Head of caudate nucleus (tissue), 42 donors: ENCODE measurements at regions of chr7 and their contacts with region 1.

Region 1: GRCh38 chr7:99143853-99144672 is at the start of gene SMURF1:
- DNase-seq: peak; percentile 25 to 84 (median 68)

Region 2: DNA sequence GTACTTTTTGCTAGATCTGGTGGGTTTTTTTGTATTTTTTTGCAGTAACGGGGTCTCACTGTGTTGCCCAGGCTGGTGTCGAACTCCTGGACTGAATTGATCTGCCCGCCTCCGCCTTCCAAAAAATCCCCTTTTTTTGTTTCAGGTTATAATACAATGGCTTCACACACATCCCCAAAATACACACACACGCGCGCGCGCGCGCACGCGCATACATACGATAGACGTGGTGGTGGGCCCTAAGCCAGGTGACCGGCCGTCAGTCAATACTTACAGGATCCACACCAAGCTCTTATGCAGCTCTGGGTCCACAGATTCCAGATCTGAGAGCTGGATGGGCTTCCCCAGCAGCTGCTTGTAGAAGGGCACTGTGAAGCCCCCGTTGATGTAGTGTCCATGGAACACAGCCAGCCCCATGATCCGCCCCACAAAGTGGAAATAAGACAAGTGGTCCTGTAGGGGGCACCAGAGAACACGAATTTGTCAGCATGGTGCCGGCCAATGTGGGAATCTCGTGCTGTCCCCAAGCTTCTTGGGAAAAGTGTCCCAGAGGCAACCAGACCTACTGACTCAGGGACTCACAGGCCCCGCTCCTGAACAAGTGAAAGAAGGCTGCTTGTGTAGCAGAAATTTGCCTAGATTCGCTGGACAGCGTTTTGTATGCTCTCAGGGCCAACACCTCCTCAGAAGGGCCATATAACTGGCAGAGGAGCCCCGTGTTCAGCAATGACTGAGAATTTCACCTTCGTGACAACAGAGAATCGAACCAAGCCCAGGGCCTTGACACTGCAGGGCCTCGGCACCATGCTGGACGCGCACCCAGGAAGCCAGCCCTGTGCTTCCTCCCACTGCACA is 103.7 kb before region 1 on chr7:
- intact Hi-C with region 1: loop called (anchors 5 kb)
- DNase-seq: peak; percentile 68 to 96 (median 86)

Region 3: DNA sequence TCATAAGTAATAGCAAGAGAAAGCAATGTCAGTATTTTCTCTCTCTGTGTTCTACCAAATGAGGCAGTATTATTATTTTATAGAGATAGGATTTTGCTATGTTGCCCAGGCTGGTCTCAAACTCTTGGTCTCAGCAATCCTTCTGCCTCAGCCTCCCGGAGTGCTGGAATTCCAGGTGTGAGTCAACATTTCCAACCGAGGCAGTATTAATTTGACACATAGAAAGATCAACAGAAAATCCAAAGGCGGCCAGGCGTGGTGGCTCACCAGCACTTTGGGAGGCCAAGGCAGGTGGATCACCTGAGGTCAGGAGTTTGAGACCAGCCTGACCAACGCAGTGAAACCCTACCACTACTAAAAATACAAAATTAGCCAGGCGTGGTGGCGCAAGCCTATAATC is 71.9 kb before region 1 on chr7:
- intact Hi-C with region 1: no loop called
- DNase-seq: no peak

Region 4: DNA sequence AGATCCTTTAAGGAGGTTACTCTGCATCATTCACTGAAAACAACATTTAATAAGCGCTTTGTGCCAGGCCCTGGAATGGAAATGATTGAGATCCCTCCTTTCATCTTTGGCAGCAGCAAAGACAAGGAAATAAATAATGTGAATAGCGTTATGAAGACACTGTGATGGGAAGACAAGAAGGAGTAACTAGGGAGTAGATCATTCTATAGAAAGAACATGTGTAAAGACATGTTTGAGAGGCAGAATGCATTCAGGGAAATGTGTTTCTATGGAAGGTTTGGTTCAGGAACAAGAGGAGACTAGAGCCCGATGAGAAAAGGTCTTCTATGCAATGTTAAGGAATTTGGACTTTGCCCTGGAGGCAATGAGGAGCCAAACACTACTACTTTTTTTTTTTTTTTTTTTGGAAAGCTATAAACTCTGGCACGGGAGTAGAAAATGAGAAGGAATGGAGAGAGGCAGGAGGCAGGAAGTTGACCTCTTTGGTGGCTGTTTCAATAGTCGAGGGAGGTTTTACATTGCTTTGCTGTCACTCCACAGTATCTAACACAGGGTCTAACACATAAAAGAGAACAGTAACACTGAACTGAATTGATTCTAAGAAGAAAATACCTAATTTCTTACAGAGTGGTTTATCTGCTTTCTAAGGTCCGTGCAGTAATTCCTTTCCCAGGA is 45.1 kb before region 1 on chr7:
- intact Hi-C with region 1: no loop called
- DNase-seq: no peak

Region 5: DNA sequence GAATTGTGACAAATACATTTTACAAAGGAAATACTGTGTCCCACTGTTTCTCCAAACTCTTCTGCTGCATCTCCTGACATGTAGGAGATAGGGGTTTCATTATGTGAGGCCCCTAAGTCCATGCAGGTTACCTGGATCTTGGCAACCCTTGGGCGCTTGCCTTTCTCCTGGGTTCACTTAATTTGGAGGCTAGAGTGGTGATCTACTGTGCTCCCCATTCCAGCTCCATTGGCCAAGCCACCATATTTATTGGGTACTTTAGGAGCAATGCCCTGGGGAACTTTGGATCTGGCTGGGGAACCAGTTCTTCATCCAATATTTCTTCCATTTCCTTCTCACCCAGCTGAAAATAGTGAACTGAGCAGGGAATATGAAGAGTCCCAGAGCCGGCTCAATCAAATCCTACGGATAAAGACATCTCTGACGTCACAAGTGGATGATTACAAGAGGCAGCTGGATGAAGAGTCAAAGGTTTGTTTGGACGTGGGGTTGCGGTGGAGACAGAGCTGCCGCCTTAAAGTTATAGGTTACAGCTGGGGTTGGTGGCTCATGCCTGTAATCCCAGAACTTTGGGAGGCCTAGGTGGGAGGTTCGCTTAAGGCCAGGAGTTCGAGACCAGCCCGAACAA is 147.0 kb after region 1 on chr7:
- intact Hi-C with region 1: no loop called
- DNase-seq: no peak

Region 6: GRCh38 chr7:99325545-99326407 is 181.7 kb after region 1 on chr7 and contains the start of gene ARPC1A:
- intact Hi-C with region 1: loop called (anchors 5 kb)
- DNase-seq: peak; percentile 52 to 93 (median 83)